Esophagus squamous epithelium (tissue), 5 donors: ENCODE measurements at regions of chr18 and their contacts with region 1.

Region 1: GRCh38 chr18:50967714-50968661 is at the start of gene ELAC1:
- DNase-seq: peak; percentile 5
- H3K4me3 ChIP-seq: peak within 1 kb of the TSS; percentile 80 to 95 (median 92)
- H3K27ac ChIP-seq: peak within 1 kb of the TSS; percentile 96 to 99 (median 98)
- H3K4me1 ChIP-seq: peaks cover 9 to 35% (median 13%) of the 10 kb centered on the region in 3 donors
- H3K27me3 ChIP-seq: no peaks in the 10 kb centered on the region
- CTCF ChIP-seq: no peak
- POLR2A ChIP-seq: peak in 2 of 4 donors; percentile 95 to 96
- total RNA-seq, gene ELAC1: 1.6 to 8.9 (median 6.0) TPM

Region 2: GRCh38 chr18:50586710-50587109 is 381.3 kb before region 1 on chr18:
- intact Hi-C with region 1: no loop called
- DNase-seq: no peak
- H3K4me3 ChIP-seq: no peak overlapping the region
- H3K27ac ChIP-seq: no peak overlapping the region
- H3K4me1 ChIP-seq: no peaks in the 10 kb centered on the region
- H3K27me3 ChIP-seq: peaks cover 0 to 3% (median 0%) of the 10 kb centered on the region in 4 donors
- CTCF ChIP-seq: peak in 2 of 6 experiments; percentile 6 to 27
- POLR2A ChIP-seq: no peak

Region 3: GRCh38 chr18:50886929-50887328 is 81.1 kb before region 1 on chr18:
- intact Hi-C with region 1: no loop called
- DNase-seq: no peak
- H3K4me3 ChIP-seq: no peak overlapping the region
- H3K27ac ChIP-seq: no peak overlapping the region
- H3K4me1 ChIP-seq: peaks cover 0 to 4% (median 0%) of the 10 kb centered on the region in 3 donors
- H3K27me3 ChIP-seq: no peaks in the 10 kb centered on the region
- CTCF ChIP-seq: no peak
- POLR2A ChIP-seq: no peak

Region 4: GRCh38 chr18:51029694-51030536 is 61.9 kb after region 1 on chr18 and contains the start of gene SMAD4:
- intact Hi-C with region 1: loop called (anchors 10 kb)
- DNase-seq: peak; percentile 62
- H3K4me3 ChIP-seq: peak within 1 kb of the TSS; percentile 58 to 88 (median 80)
- H3K27ac ChIP-seq: peak within 1 kb of the TSS; percentile 98 to 100 (median 98)
- H3K4me1 ChIP-seq: peaks cover 21 to 64% (median 26%) of the 10 kb centered on the region in 3 donors
- H3K27me3 ChIP-seq: no peaks in the 10 kb centered on the region
- CTCF ChIP-seq: peak in 1 of 6 experiments; percentile 14
- POLR2A ChIP-seq: peak in 3 of 4 donors; percentile 53 to 96 (median 86)
- total RNA-seq, gene SMAD4: 32.9 to 84.5 (median 49.3) TPM

Region 5: DNA sequence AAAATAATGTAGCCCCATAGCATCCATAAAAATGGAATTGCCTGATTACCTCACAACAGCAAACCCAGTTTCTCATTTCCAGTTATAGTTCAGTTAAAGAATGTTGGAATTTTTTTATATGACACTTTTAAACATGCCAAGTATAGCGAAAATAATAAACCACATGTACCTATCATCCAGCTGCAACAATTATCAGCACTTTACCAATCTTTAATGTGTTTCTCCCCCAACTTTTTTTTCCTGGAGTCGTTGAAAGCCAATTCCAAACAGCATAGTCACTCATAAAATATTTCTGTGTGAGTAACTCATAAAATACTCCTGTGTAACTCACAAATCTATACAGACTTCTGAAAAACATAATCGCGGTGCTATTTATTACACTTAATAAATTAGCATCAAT is 100.1 kb after region 1 on chr18:
- intact Hi-C with region 1: no loop called
- DNase-seq: no peak
- H3K4me3 ChIP-seq: no peak overlapping the region
- H3K27ac ChIP-seq: no peak overlapping the region
- H3K4me1 ChIP-seq: peaks cover 0 to 6% (median 0%) of the 10 kb centered on the region in 3 donors
- H3K27me3 ChIP-seq: no peaks in the 10 kb centered on the region
- CTCF ChIP-seq: no peak
- POLR2A ChIP-seq: no peak